PC-3 (cell line): ENCODE measurements at regions of chrX and their contacts with region 1.

Region 1: GRCh38 chrX:124098089-124098488 is 136.6 kb downstream of the STAG2 start:
- DNase-seq: peak; percentile 53
- ATAC-seq: peak; percentile 48; the same call in 1 of the 2 replicates
- H3K4me3 ChIP-seq: no peak overlapping the region
- H3K27ac ChIP-seq: no peak overlapping the region
- H3K4me1 ChIP-seq: no peaks in the 10 kb centered on the region
- H3K27me3 ChIP-seq: no peaks in the 10 kb centered on the region
- CTCF ChIP-seq: peak; percentile 68

Region 2: GRCh38 chrX:124263743-124264142 is 165.7 kb after region 1 on chrX:
- CTCF ChIA-PET with region 1: no interaction called
- POLR2A ChIA-PET with region 1: no interaction called
- intact Hi-C with region 1: no loop called
- DNase-seq: peak; percentile 18
- ATAC-seq: no peak
- H3K4me3 ChIP-seq: no peak overlapping the region
- H3K27ac ChIP-seq: no peak overlapping the region
- H3K4me1 ChIP-seq: no peaks in the 10 kb centered on the region
- H3K27me3 ChIP-seq: no peaks in the 10 kb centered on the region
- CTCF ChIP-seq: no peak

Region 3: GRCh38 chrX:124369722-124370121 is 271.6 kb after region 1 on chrX:
- CTCF ChIA-PET with region 1: no interaction called
- POLR2A ChIA-PET with region 1: no interaction called
- intact Hi-C with region 1: loop called (anchors 5 kb)
- DNase-seq: peak; percentile 7
- ATAC-seq: peak; percentile 85
- H3K4me3 ChIP-seq: no peak overlapping the region
- H3K27ac ChIP-seq: no peak overlapping the region
- H3K4me1 ChIP-seq: peaks cover 13% of the 10 kb centered on the region
- H3K27me3 ChIP-seq: no peaks in the 10 kb centered on the region
- CTCF ChIP-seq: no peak

Region 4: GRCh38 chrX:124388562-124388961 is 290.5 kb after region 1 on chrX:
- CTCF ChIA-PET with region 1: interaction called, 7 read pairs
- POLR2A ChIA-PET with region 1: no interaction called
- intact Hi-C with region 1: loop called (anchors 5 kb)
- DNase-seq: peak; percentile 64
- ATAC-seq: peak; percentile 77
- H3K4me3 ChIP-seq: no peak overlapping the region
- H3K27ac ChIP-seq: no peak overlapping the region
- H3K4me1 ChIP-seq: peaks cover under 1% of the 10 kb centered on the region
- H3K27me3 ChIP-seq: no peaks in the 10 kb centered on the region
- CTCF ChIP-seq: peak; percentile 58

Region 5: GRCh38 chrX:124406294-124407014 is 308.4 kb after region 1 on chrX:
- CTCF ChIA-PET with region 1: no interaction called
- POLR2A ChIA-PET with region 1: no interaction called
- intact Hi-C with region 1: loop called (anchors 1 kb)
- DNase-seq: peak; percentile 93
- ATAC-seq: peak; percentile 94
- H3K4me3 ChIP-seq: peak overlapping the region; percentile 20; the same call in 1 of the 2 replicates
- H3K27ac ChIP-seq: peak overlapping the region; percentile 34
- H3K4me1 ChIP-seq: peaks cover 11% of the 10 kb centered on the region
- H3K27me3 ChIP-seq: no peaks in the 10 kb centered on the region
- CTCF ChIP-seq: peak; percentile 78

Region 6: DNA sequence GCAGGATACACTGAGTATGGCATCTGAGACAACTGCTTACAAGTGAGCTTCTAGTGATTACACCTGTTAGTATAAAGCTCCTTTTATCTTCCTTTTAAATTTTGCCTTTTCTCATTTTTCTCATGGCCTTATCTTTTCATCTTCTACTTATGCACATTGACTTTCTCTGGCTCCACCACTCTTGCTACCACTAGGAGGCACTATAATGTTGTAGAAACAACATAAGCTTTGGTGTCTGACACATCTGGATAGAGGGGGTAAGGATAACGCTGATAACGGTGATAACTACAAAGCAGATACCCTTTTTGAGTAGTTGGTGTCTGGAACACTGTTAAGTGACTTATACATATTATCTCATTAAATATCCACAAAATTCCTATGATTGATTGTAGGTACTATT is 1034.2 kb after region 1 on chrX:
- CTCF ChIA-PET with region 1: no interaction called
- POLR2A ChIA-PET with region 1: no interaction called
- intact Hi-C with region 1: loop called (anchors 5 kb)
- DNase-seq: peak; percentile 53
- ATAC-seq: no peak
- H3K4me3 ChIP-seq: no peak overlapping the region
- H3K27ac ChIP-seq: no peak overlapping the region
- H3K4me1 ChIP-seq: no peaks in the 10 kb centered on the region
- H3K27me3 ChIP-seq: no peaks in the 10 kb centered on the region
- CTCF ChIP-seq: peak; percentile 78